Heart left ventricle (tissue), 16 donors: ENCODE measurements at regions of chr1 and their contacts with region 1.

Region 1: DNA sequence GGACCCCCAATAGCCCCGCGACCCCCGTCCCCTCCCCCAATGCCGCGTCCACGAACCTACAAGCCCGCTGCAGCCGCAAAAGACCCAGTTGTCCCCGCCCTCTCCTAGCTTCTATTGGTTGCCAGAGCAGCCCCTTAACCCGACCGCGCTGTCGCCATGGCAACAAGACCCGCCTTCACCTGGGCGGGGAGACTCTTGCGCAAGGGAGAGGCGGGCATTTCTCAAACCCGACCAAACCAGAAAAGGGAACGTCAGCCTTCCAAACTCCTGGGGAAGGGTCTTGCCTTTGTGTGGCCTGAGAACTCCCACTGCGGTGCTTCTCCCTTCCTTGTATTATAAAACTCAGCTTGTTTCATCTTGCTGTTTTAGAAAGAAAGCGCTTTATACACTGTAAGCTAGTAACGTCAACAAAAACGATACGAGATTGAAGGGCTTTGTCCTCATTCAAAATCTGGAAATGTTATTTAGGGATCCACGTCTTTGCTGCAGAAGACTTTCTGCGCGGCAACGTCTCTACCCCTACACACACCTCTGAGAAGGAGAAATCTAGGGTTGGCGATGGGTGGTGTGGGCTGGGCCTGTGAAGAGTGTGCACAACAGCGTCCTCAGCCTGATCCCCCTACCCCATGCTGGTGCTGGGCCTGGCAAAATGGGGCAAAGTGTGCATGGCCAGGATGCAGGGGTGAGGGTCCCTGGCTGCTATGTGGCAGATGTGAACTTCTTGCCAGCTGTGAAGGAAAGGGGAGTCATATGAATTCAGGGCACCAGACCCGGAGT is at the start of gene TMEM9:
- DNase-seq: peak; percentile 96 to 99 (median 98)
- ATAC-seq: peak; percentile 96 to 99 (median 98)
- H3K4me3 ChIP-seq: peak within 1 kb of the TSS; percentile 78 to 100 (median 90)
- H3K27ac ChIP-seq: peak within 1 kb of the TSS in 11 of 12 donors; percentile 6 to 83 (median 63)
- H3K4me1 ChIP-seq: peaks cover 0 to 20% (median 13%) of the 10 kb centered on the region in 12 donors
- H3K27me3 ChIP-seq: no peaks in the 10 kb centered on the region
- CTCF ChIP-seq: no peak
- POLR2A ChIP-seq: no peak
- total RNA-seq, gene TMEM9: 22.6 to 35.9 (median 29.3) TPM

Region 2: GRCh38 chr1:200774735-200775444 is 379.7 kb before region 1 on chr1:
- intact Hi-C with region 1: no loop called
- DNase-seq: no peak
- ATAC-seq: peak in 2 of 4 donors; percentile 7 to 32
- H3K4me3 ChIP-seq: no peak overlapping the region
- H3K27ac ChIP-seq: peak overlapping the region in 9 of 12 donors; percentile 1 to 44 (median 32)
- H3K4me1 ChIP-seq: peaks cover 0 to 57% (median 32%) of the 10 kb centered on the region in 12 donors
- H3K27me3 ChIP-seq: no peaks in the 10 kb centered on the region
- CTCF ChIP-seq: no peak
- POLR2A ChIP-seq: no peak

Region 3: DNA sequence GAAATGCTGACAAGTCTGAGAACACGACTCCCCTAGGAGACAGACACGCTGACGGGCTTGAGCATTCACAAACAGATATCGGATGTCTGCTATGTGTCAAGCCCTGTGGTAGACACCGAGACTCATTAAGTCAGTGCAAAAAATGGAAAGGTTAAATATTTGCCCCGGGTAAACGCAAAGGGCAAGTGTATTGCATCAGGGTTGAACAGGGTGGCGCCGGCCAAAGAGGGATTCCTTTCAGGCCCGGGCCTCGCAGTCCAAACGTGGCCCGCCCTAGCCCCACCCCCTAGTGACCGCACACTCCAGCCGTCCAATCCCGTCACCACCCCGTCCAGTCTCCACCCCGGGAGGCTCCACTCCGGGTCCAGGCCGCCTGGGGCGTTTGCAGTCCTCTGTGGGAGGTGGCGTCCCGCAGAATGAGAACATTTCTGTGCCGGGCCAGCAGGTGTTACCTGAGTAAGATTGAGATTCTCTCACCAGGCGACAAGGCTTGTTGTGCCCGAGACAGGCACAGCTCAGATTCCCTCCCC is 16.0 kb after region 1 on chr1:
- intact Hi-C with region 1: loop called in 1 of 10 experiments (anchors 1 kb)
- DNase-seq: peak; percentile 94 to 97 (median 96)
- ATAC-seq: peak; percentile 98 to 99 (median 98)
- H3K4me3 ChIP-seq: peak overlapping the region; percentile 28 to 81 (median 72)
- H3K27ac ChIP-seq: peak overlapping the region; percentile 73 to 95 (median 92)
- H3K4me1 ChIP-seq: peaks cover 0 to 19% (median 8%) of the 10 kb centered on the region in 12 donors
- H3K27me3 ChIP-seq: peaks cover 0 to 4% (median 0%) of the 10 kb centered on the region in 9 donors
- CTCF ChIP-seq: no peak
- POLR2A ChIP-seq: peak; percentile 56 to 89

Region 4: DNA sequence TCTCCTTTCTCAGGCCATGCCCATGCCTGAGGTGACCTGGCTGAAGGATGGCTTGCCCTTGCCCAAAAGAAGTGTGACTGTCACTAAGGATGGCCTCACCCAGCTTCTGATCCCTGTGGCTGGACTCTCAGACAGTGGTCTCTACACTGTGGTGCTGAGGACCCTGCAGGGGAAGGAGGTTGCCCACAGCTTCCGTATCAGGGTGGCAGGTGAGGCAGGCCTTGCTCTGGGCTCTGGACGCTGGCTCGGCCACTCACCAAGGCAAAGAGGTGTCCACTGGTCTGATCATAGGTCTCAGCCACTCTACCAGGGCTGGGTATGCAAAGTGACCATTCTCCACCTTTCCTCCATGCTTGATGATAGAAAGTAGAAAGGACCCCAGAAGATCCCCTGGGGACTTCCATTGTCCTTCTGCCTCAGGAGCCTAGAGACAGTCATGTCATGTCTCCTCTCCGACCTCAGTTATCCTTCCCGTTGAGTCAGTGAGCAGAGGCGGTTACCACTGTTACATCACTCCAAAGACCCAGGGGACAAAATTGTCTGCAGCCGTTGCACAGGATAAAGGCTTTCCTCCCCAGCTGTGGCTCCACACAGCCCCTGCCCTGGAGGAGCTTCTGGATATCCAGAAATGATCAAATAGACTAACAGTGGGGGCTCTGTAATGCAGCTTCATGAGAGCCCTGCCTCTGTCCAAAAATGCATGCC is 70.2 kb after region 1 on chr1:
- intact Hi-C with region 1: loop called in 2 of 10 experiments (anchors 5 to 10 kb)
- DNase-seq: no peak
- ATAC-seq: no peak
- H3K4me3 ChIP-seq: no peak overlapping the region
- H3K27ac ChIP-seq: no peak overlapping the region
- H3K4me1 ChIP-seq: no peaks in the 10 kb centered on the region
- H3K27me3 ChIP-seq: no peaks in the 10 kb centered on the region
- CTCF ChIP-seq: no peak
- POLR2A ChIP-seq: no peak

Region 5: DNA sequence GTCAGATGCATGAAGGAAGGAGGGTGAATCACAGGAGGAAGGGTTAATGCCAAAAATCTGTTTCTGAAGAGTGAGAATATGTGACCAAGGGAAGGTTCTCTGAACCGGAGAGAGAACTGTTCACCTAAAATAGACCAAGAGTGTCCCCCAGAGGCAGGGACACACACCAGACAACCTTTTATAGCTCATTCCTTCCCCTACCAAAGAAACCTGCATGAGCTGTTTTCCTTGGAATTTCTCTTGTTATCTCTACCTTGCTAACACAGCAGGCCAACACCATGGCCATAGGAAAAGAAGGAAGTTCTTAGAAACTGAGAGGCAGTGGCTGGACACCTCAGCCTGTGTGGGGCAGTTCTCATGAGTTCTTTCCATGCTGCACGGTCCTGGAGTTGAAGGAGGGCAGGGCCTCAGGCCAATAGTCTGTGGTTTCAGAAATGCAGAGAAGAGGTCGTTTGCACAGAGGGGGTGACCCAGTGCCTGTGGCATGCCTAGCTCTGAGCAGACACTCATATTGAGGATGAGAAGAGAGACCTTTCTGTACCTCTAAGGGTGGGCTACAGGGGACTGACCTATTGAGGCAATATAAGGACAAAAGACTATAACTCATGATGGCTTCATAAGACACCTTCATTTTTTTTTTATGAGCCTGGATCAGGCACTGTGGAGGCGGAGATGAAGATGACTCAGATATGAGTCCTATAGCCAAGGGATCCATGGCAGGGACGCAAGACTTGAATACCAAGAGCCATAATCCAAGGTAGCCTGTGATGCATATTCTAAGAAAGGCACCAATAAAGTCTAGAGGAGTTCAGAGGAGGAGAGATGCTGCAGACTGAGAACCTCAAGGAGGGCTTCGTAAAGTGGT is 75.4 kb after region 1 on chr1:
- intact Hi-C with region 1: loop called in 1 of 10 experiments (anchors 10 kb)
- DNase-seq: peak in 1 of 5 donors; percentile 2
- ATAC-seq: no peak
- H3K4me3 ChIP-seq: no peak overlapping the region
- H3K27ac ChIP-seq: no peak overlapping the region
- H3K4me1 ChIP-seq: no peaks in the 10 kb centered on the region
- H3K27me3 ChIP-seq: no peaks in the 10 kb centered on the region
- CTCF ChIP-seq: no peak
- POLR2A ChIP-seq: no peak